ENCODE measurements at regions of chr19 and their contacts with region 1.

Region 1: DNA sequence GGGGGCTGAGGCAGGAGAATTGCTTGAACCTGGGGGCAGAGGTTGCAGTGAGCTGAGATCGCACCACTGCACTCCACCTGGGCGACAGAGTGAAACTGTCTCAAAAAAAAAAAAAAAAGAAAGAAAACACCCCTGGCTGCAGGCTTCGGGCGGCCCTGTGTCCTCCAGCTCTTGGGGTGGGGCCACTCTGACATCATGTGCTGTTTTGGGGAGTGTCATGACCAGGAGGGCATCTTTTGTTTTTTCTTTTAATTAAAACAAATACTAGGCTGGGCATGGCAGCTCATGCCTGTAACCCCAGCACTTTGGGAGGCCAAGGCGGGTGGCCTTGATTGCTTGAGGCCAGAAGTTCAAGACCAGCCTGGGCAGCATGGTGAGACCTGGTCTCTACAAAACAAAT is 52.1 kb downstream of the KDM4B start:
- DNase-seq: no peak
- H3K4me3 ChIP-seq: no peak overlapping the region
- H3K27ac ChIP-seq: no peak overlapping the region
- H3K4me1 ChIP-seq: no peaks in the 10 kb centered on the region
- H3K27me3 ChIP-seq: no peaks in the 10 kb centered on the region
- CTCF ChIP-seq: no peak

Region 2: DNA sequence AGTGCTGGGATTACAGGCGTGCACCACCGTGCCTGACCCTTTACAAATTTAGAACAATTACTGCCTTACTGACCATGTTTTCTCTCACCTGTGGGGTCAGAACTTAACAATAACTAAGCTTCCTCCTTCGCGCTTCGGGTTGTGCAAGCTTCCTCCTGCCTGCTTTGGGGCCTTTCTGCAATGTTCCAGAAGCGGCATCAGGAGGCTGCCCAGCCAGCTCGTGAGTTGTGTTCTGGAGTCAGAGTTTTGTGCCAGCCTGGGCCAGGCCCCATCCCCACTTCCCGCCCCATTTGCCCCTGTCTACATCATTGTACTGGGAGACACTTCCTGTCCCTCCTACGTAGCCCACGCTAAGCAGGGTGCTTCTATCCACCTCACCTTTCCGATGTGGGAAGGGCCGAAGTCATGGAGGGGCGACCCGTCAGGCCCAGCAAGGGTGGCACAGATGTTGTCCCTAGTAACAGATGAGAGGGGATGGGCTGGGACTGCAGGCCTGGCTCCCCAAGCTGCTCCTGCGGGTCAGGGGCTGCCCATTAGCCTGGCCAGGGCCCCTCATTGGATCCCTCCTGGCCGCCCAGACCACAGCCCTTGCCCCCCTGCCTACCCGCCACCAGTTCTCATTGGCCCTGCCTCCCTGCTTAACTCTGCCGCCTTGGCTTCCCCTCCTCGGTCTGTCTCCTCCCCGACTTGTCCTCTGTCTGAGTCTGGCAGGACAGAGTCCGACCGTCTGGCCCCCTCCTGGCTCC is 98.3 kb before region 1 on chr19:
- CTCF ChIA-PET with region 1: no interaction called
- POLR2A ChIA-PET with region 1: interaction called, 21 read pairs
- intact Hi-C with region 1: no loop called
- DNase-seq: no peak
- H3K4me3 ChIP-seq: no peak overlapping the region
- H3K27ac ChIP-seq: no peak overlapping the region
- H3K4me1 ChIP-seq: no peaks in the 10 kb centered on the region
- H3K27me3 ChIP-seq: no peaks in the 10 kb centered on the region
- CTCF ChIP-seq: no peak

Region 3: GRCh38 chr19:4951656-4952055 is 69.4 kb before region 1 on chr19:
- CTCF ChIA-PET with region 1: no interaction called
- POLR2A ChIA-PET with region 1: no interaction called
- intact Hi-C with region 1: no loop called
- DNase-seq: no peak
- H3K4me3 ChIP-seq: no peak overlapping the region
- H3K27ac ChIP-seq: no peak overlapping the region
- H3K4me1 ChIP-seq: no peaks in the 10 kb centered on the region
- H3K27me3 ChIP-seq: no peaks in the 10 kb centered on the region
- CTCF ChIP-seq: no peak